CD8-positive, alpha-beta T cell (primary cell): ENCODE measurements at regions of chr16 and their contacts with region 1.

Region 1: DNA sequence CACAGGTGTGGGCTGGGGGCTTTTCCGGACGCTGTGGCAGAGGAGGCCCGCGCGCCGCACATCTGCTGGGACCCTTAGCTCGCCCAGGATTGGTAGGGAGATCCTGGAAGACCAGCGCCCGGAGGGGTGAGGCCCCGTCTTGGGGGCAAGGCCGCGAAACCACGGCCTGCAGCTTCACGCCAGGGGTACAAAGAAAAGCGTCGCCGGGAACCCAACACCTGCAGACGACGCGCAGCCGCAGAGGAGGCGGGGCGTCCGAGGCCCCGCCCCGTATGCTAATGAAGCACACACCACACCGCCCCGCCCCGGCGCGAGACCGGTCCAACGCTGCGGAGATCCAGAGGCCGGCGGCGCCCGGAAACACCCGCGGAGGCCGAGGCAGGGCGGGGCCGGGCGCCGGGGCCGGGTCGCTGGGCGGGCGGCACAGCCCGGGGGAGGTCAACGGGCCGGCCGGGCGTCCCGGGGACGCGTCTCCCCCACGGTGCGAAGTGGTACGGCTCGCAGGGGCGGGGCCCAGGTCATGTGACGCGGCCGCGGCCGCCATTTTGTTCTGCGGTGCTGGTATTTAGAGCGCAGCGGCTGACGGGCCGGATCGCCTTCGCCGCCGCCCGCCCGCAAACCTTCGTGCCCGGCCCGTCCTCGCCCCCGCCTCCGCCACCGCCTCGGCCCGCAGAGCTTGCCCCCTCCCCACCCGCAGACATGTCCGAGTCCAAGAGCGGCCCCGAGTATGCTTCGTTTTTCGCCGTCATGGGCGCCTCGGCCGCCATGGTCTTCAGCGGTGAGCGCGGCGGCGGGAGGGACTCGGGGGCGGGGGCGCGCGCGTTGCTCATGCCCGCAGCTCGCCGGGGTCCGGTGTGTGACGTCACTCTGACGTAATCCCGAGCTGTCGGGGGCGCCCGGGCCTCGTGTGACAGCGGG is at the start of gene ATP6V0C:
- DNase-seq: peak; percentile 84 to 97 (median 92)
- ATAC-seq: peak; percentile 89
- H3K4me3 ChIP-seq: peak within 1 kb of the TSS; percentile 67 to 69
- H3K4me3 Mint-ChIP-seq: peak within 1 kb of the TSS; percentile 94
- H3K27ac ChIP-seq: peak within 1 kb of the TSS; percentile 91 to 94
- H3K27ac Mint-ChIP-seq: peak within 1 kb of the TSS; percentile 97
- H3K4me1 ChIP-seq: peaks cover 47% of the 10 kb centered on the region
- H3K4me1 Mint-ChIP-seq: peaks cover 49% of the 10 kb centered on the region
- H3K27me3 ChIP-seq: no peaks in the 10 kb centered on the region
- H3K27me3 Mint-ChIP-seq: no peaks in the 10 kb centered on the region
- CTCF ChIP-seq: no peak
- total RNA-seq, gene ATP6V0C: 260 TPM

Region 2: DNA sequence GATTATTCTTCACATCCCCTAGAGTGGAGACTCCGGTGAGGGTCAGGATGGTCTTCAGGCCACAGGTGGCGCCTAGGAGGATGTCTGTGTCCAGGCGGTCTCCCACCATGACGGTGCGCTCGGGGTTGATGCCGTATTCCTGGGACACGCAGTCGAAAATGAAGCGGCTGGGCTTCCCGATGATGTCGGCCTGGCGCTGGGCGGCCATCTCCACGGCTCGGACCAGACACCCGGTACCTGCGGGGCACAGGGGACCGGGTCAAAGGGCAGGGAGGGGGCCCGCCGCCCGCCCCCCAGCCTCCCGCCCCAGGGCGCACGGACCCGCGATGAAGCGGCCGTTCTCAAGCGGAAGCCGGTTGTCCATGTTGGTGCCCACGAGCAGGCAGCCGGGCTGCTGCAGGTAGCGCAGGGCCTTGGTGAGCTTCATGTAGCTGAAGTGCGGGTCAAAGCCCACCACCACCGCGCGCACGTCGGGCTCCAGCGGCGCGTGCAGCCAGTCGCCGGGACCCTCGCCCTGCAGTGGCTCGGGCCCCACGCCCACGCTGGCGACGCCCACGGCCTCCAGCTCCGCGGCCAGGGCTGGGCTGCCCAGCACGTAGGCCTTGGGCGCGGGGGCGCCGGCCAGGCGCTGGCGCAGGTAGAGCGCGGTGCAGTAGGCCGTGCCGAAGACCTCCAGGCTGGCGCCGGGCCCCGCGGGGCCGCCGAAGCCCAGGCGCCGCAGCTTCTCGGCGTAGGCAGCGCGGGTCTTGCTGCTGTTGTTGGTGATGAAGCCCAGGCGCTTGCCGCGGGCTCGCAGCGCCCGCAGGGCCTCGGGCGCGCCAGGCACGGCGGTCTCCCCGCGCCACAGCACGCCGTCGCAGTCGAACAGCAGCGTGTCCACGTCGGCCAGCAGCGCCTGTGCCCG is 299.6 kb before region 1 on chr16:
- CTCF ChIA-PET with region 1: no interaction called
- POLR2A ChIA-PET with region 1: no interaction called
- intact Hi-C with region 1: loop called in 1 of 2 experiments (anchors 2 kb)
- DNase-seq: no peak
- ATAC-seq: no peak
- H3K4me3 ChIP-seq: peak overlapping the region; percentile 24 to 70
- H3K4me3 Mint-ChIP-seq: peak overlapping the region; percentile 78
- H3K27ac ChIP-seq: peak overlapping the region in 1 of 2 experiments; percentile 47
- H3K27ac Mint-ChIP-seq: no peak overlapping the region
- H3K4me1 ChIP-seq: peaks cover 14% of the 10 kb centered on the region
- H3K4me1 Mint-ChIP-seq: peaks cover 13% of the 10 kb centered on the region
- H3K27me3 ChIP-seq: no peaks in the 10 kb centered on the region
- H3K27me3 Mint-ChIP-seq: no peaks in the 10 kb centered on the region
- CTCF ChIP-seq: no peak

Region 3: DNA sequence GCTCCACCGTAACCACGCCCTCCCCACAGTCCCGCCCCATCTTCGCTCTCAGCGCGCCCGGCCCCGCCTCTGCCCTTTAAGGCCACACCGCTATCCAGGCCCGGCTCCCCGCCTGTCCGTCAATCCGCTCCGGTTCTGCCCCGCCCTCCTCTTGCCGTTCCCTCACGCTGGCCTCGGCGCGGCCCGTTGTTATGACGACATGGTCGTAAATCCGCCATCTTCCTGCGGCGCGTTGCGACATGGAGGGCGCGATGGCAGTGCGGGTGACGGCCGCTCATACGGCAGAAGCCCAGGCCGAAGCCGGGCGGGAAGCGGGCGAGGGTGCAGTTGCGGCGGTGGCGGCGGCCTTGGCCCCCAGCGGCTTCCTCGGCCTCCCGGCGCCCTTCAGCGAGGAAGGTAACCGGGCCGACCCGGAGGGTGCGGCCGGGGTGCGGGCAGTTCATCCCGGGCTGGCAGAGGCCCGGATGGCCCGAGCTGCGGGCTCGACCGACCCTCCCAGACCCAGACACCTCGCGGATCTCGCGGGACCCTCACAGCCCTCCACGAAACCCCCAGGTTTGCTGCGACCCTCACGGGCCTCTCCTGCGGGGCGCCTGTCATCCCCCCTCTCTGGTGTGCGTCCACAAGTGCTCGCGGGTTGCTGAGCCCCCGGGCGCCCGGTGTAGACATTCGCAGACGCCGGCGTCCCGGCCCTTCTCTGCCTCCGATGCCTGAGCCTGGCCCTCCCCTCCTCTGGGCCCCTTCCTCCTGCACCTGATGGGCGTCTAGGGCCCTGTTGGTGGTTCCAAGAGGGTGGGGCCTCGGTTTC is 290.1 kb before region 1 on chr16 and contains the start of gene E4F1:
- CTCF ChIA-PET with region 1: no interaction called
- POLR2A ChIA-PET with region 1: no interaction called
- intact Hi-C with region 1: loop called in 1 of 2 experiments (anchors 1 kb)
- DNase-seq: peak; percentile 97 to 100 (median 99)
- ATAC-seq: peak; percentile 96
- H3K4me3 ChIP-seq: peak within 1 kb of the TSS; percentile 81 to 88
- H3K4me3 Mint-ChIP-seq: peak within 1 kb of the TSS; percentile 94
- H3K27ac ChIP-seq: peak within 1 kb of the TSS; percentile 67 to 76
- H3K27ac Mint-ChIP-seq: peak within 1 kb of the TSS; percentile 85
- H3K4me1 ChIP-seq: peaks cover 13% of the 10 kb centered on the region
- H3K4me1 Mint-ChIP-seq: peaks cover 22% of the 10 kb centered on the region
- H3K27me3 ChIP-seq: no peaks in the 10 kb centered on the region
- H3K27me3 Mint-ChIP-seq: no peaks in the 10 kb centered on the region
- CTCF ChIP-seq: no peak
- total RNA-seq, gene E4F1: 36.3 to 37.5 TPM

Region 4: GRCh38 chr16:2443555-2443954 is 70.1 kb before region 1 on chr16:
- CTCF ChIA-PET with region 1: no interaction called
- POLR2A ChIA-PET with region 1: no interaction called
- intact Hi-C with region 1: no loop called
- DNase-seq: peak in 1 of 9 experiments; percentile 12
- ATAC-seq: no peak
- H3K4me3 ChIP-seq: no peak overlapping the region
- H3K4me3 Mint-ChIP-seq: no peak overlapping the region
- H3K27ac ChIP-seq: no peak overlapping the region
- H3K27ac Mint-ChIP-seq: no peak overlapping the region
- H3K4me1 ChIP-seq: no peaks in the 10 kb centered on the region
- H3K4me1 Mint-ChIP-seq: peaks cover 7% of the 10 kb centered on the region
- H3K27me3 ChIP-seq: no peaks in the 10 kb centered on the region
- H3K27me3 Mint-ChIP-seq: no peaks in the 10 kb centered on the region
- CTCF ChIP-seq: no peak

Region 5: GRCh38 chr16:2459647-2460390 is 53.8 kb before region 1 on chr16 and contains the start of gene TEDC2:
- CTCF ChIA-PET with region 1: no interaction called
- POLR2A ChIA-PET with region 1: no interaction called
- intact Hi-C with region 1: loop called in 1 of 2 experiments (anchors 2 kb)
- DNase-seq: peak; percentile 92 to 98 (median 98)
- ATAC-seq: peak; percentile 100
- H3K4me3 ChIP-seq: peak within 1 kb of the TSS; percentile 54 to 62
- H3K4me3 Mint-ChIP-seq: peak within 1 kb of the TSS; percentile 82
- H3K27ac ChIP-seq: peak within 1 kb of the TSS in 1 of 2 experiments; percentile 8
- H3K27ac Mint-ChIP-seq: peak within 1 kb of the TSS; percentile 64
- H3K4me1 ChIP-seq: peaks cover 9% of the 10 kb centered on the region
- H3K4me1 Mint-ChIP-seq: peaks cover 6% of the 10 kb centered on the region
- H3K27me3 ChIP-seq: no peaks in the 10 kb centered on the region
- H3K27me3 Mint-ChIP-seq: no peaks in the 10 kb centered on the region
- CTCF ChIP-seq: no peak
- total RNA-seq, gene TEDC2: 0.30 to 0.69 TPM

Region 6: DNA sequence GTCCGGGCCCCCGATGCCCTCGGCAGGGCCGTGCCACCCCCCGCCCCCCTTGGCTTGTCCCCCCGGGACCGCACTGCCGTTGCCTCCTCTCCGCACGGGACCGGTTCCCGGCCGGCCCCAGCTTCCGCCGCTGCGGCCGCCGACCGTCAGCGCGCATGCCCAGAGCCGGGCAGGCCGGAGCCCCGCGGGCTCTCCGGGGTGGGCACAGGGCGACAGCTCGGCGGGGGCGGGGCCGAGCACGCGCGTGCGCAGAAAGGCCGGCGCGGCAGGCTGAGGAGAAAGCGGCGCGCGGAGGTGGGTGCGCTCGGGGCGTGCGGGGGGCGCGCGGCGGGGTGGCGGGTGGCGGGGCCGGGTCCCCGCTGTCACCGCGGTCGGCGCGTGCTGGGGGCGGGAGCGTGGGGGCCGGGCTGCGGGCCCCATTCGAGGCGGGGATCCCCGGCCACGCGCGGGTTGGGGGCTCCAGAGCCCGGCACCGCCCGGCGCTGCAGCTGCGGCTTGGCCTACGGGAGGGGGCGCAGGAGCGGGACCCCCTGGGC is 38.7 kb before region 1 on chr16 and contains the start of gene TBC1D24:
- CTCF ChIA-PET with region 1: no interaction called
- POLR2A ChIA-PET with region 1: no interaction called
- intact Hi-C with region 1: loop called (anchors 1 to 2 kb)
- DNase-seq: peak; percentile 48 to 89 (median 77)
- ATAC-seq: peak; percentile 61
- H3K4me3 ChIP-seq: peak within 1 kb of the TSS; percentile 62 to 70
- H3K4me3 Mint-ChIP-seq: peak within 1 kb of the TSS; percentile 77
- H3K27ac ChIP-seq: peak within 1 kb of the TSS in 1 of 2 experiments; percentile 36
- H3K27ac Mint-ChIP-seq: no peak within 1 kb of the TSS
- H3K4me1 ChIP-seq: peaks cover 29% of the 10 kb centered on the region
- H3K4me1 Mint-ChIP-seq: peaks cover 24% of the 10 kb centered on the region
- H3K27me3 ChIP-seq: peaks cover 11 to 20% of the 10 kb centered on the region in 2 experiments
- H3K27me3 Mint-ChIP-seq: peaks cover 15% of the 10 kb centered on the region
- CTCF ChIP-seq: no peak
- total RNA-seq, gene TBC1D24: 2.8 to 3.8 TPM

Region 7: DNA sequence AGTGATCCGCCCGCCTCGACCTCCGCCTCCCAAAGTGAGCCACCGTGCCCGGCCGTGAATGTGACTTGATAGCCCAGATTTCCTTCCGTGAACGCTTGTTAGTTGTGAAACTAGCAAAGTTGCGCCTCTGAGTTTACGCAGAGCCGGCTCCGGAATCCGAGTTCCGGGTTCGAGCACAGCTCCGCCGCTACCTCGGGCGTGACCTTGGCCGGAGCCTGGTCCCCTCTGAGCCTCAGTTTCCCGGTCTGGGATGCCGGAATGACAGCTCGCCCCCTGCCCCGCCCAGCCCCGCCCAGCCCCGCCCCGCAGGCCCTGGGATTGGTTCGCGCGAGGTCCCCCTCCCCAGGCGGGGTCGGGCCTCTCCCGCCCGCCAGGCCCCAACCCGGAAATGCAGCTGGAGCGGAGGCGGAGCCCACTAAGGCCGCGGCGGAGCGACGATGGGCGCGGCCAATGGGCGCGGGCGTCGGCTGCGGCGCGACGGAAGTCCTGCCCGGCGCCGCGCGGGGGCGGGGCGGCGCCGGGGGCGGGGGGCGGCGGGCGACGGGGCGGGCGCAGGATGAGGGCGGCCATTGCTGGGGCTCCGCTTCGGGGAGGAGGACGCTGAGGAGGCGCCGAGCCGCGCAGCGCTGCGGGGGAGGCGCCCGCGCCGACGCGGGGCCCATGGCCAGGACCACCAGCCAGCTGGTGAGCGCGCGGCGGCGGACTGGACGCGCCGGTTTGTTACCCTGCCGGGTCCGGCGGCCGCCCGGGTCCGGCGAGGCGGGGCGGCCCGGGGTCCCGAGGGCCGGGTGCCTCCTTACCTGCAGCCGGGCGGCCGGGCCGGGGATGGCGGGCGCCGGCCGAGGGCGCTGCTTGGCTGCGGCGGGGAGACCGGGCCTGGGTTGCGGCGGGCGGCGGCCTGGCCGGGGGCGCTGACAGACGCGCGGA is 24.1 kb after region 1 on chr16 and contains the start of gene PDPK1:
- CTCF ChIA-PET with region 1: no interaction called
- POLR2A ChIA-PET with region 1: interaction called, 59 read pairs
- intact Hi-C with region 1: loop called (anchors 1 kb)
- DNase-seq: peak; percentile 87 to 98 (median 94)
- ATAC-seq: peak; percentile 87
- H3K4me3 ChIP-seq: peak within 1 kb of the TSS; percentile 74 to 85
- H3K4me3 Mint-ChIP-seq: peak within 1 kb of the TSS; percentile 87
- H3K27ac ChIP-seq: peak within 1 kb of the TSS; percentile 63 to 75
- H3K27ac Mint-ChIP-seq: peak within 1 kb of the TSS; percentile 91
- H3K4me1 ChIP-seq: peaks cover 31% of the 10 kb centered on the region
- H3K4me1 Mint-ChIP-seq: peaks cover 43% of the 10 kb centered on the region
- H3K27me3 ChIP-seq: no peaks in the 10 kb centered on the region
- H3K27me3 Mint-ChIP-seq: no peaks in the 10 kb centered on the region
- CTCF ChIP-seq: no peak
- total RNA-seq, gene PDPK1: 42.3 to 49.2 TPM